GM10248 (cell line): ENCODE measurements at regions of chr2 and their contacts with region 1.

Region 1: GRCh38 chr2:213284105-213285090 is at the start of gene SPAG16:
- DNase-seq: peak; percentile 99
- CTCF ChIP-seq: no peak

Region 2: DNA sequence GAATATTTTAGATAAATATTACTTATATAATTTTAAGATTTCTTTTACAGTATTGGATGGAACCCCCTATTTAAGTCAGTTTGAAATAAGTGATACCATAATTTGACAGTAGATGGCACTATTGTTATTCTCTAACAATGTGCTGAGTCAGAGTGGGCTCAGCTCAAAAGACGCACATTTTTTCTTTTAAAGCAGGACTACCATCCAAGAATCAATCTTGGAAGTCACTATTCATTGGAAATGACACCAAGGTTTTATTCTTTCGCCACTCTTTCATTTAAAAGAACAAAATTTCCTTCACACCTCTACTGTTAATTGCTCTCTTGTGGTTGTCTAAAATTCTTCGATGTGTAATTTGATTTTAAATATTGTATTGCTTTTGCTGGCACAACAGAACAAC is 32.8 kb before region 1 on chr2:
- CTCF ChIA-PET with region 1: interaction called, 10 read pairs
- POLR2A ChIA-PET with region 1: no interaction called
- DNase-seq: peak; percentile 35
- CTCF ChIP-seq: peak; percentile 49